ENCODE measurements at regions of chr6 and their contacts with region 1.

Region 1: GRCh38 chr6:142692942-142693341 is 252.0 kb downstream of the HIVEP2 start:
- DNase-seq: peak; percentile 97
- H3K4me3 ChIP-seq: peak overlapping the region; percentile 20
- H3K27ac ChIP-seq: peak overlapping the region; percentile 98
- H3K27me3 ChIP-seq: no peaks in the 10 kb centered on the region
- CTCF ChIP-seq: peak; percentile 93

Region 2: DNA sequence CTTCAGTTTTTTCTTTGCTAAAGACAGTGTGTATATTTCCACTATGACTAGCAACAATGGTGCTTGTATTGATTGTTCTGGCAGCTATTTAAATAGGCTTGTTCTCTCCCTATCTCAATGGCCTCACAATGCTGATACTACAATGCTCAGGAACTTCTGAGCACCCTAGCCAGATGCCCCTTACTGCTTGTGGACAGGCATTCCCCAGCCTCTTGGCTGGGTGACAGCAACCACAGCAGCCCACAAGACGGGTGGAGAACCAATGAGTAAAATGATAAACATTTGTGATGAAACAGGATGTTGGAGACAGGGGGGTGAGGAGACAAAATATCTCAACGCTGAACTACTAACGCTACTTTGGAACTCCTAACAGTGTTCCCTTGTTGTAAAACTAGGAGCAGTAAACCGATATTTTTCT is 209.7 kb after region 1 on chr6:
- in situ Hi-C with region 1: no loop called
- DNase-seq: peak; percentile 98
- H3K4me3 ChIP-seq: no peak overlapping the region
- H3K27ac ChIP-seq: peak overlapping the region; percentile 97
- H3K27me3 ChIP-seq: no peaks in the 10 kb centered on the region
- CTCF ChIP-seq: no peak

Region 3: GRCh38 chr6:142946181-142946923 is 253.4 kb after region 1 on chr6:
- in situ Hi-C with region 1: loop called (anchors 10 kb)
- DNase-seq: peak; percentile 98
- H3K4me3 ChIP-seq: peak overlapping the region; percentile 98
- H3K27ac ChIP-seq: peak overlapping the region; percentile 99
- H3K27me3 ChIP-seq: no peaks in the 10 kb centered on the region
- CTCF ChIP-seq: no peak

Region 4: GRCh38 chr6:143427109-143427817 is 734.3 kb after region 1 on chr6:
- in situ Hi-C with region 1: loop called (anchors 10 kb)
- DNase-seq: peak; percentile 75
- H3K4me3 ChIP-seq: no peak overlapping the region
- H3K27ac ChIP-seq: no peak overlapping the region
- H3K27me3 ChIP-seq: no peaks in the 10 kb centered on the region
- CTCF ChIP-seq: peak; percentile 99